ENCODE measurements at regions of chr16 and their contacts with region 1.

Region 1: GRCh38 chr16:81623363-81624102 is 155.6 kb upstream of the PLCG2 start:
- DNase-seq: no peak

Region 2: GRCh38 chr16:83253521-83253920 is 1630.0 kb after region 1 on chr16:
- intact Hi-C with region 1: loop called in 1 of 2 experiments (anchors 5 kb)
- DNase-seq: no peak